RWPE1 (cell line): ENCODE measurements at regions of chr20 and their contacts with region 1.

Region 1: DNA sequence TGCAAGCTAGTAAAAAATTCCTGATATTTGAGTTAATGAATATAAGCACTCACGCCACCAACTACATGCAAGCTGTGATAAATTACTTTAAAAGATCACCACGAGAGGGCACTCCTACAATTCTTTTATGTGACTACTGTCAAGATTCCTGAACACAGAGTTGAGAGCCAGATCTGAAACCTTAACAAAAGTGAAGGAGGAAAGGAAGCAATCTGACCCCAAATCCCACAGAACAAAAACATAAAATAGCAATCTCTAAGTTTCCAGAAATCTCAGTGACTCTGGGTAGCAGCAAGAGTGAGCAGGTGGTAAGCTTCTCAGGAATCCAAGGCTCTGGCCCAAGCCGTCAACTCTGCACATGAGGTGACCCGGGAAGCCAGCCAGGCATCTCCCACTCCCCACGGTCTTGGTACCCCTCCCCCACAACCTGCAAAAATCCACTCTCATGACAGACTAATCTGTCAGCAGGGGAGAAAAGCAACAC is 55.1 kb downstream of the STAU1 start:
- DNase-seq: peak; percentile 71
- H3K27ac ChIP-seq: peak overlapping the region; percentile 2; the same call in 1 of the 2 replicates
- CTCF ChIP-seq: peak; percentile 80

Region 2: GRCh38 chr20:49122920-49123319 is 10.1 kb before region 1 on chr20:
- CTCF ChIA-PET with region 1: interaction called, 11 read pairs
- POLR2A ChIA-PET with region 1: no interaction called
- DNase-seq: no peak
- H3K27ac ChIP-seq: no peak overlapping the region
- CTCF ChIP-seq: no peak

Region 3: DNA sequence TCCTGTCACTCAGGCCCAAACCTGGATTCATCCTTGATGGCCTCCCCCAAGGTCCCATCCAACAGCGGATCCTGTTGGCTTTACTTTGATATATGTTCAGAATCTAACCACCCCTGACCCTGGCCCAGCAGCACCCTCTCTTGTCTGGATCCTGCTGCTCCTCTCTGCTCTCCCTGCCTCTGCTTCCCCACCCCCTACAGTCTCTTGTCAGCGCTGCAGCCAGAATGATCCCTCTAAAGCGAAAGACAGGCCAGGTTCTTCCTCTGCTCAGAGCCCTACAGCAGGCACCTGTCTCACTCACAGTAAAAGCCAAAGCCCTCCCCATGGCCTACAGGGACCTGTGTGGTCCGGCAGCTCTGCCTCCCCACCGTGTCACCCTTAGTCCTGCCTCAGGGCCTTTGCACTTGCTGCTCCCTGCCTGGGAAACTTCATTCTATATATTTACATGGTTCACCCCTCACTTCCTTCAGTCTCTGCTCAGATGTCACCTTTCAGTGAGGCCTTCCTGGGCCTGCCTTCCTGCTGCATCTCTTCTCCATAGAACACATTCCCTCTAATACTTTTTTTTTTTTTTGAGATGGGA is 386.8 kb after region 1 on chr20:
- CTCF ChIA-PET with region 1: no interaction called
- POLR2A ChIA-PET with region 1: no interaction called
- DNase-seq: no peak
- H3K27ac ChIP-seq: no peak overlapping the region
- CTCF ChIP-seq: no peak